Calu3 (cell line): ENCODE measurements at regions of chr9 and their contacts with region 1.

Region 1: DNA sequence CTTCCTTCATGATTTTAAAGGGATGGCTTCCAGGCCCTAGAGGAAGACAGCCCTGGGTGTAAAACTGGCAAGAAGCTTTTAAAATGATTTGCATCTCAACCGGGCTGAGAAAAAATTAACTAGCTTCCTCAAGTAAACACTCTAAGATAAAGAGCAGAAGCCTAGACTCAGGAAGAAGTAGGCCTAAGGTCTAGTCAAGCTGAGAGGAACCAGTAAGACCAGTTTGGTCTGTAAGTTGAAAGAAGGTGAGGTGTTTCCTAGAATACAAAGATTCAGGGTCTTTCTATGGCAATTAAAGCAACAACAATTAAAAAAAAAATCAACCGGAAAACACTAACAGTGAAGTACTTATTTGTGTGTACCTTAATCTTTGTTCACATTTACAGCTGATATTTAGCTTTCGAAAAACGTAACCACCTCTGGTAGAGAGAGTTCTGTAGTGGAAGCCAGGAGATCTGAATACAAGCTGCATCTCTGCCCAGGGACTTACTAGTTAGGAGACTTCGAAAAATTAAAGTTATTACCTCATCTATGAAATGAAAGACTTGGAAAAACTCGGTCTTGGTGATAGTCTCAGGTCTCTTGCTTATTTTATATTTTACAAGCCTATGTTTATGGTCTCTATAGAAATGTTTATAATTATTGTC is 75.7 kb downstream of the TUSC1 start:
- DNase-seq: peak; percentile 9
- H3K4me3 Mint-ChIP-seq: peak overlapping the region; percentile 40
- H3K27ac Mint-ChIP-seq: peak overlapping the region; percentile 45
- H3K4me1 Mint-ChIP-seq: peaks cover 22% of the 10 kb centered on the region
- H3K27me3 Mint-ChIP-seq: no peaks in the 10 kb centered on the region
- CTCF ChIP-seq: no peak

Region 2: GRCh38 chr9:25648116-25648515 is 45.6 kb after region 1 on chr9:
- CTCF ChIA-PET with region 1: no interaction called
- intact Hi-C with region 1: loop called (anchors 5 kb)
- DNase-seq: no peak
- H3K4me3 Mint-ChIP-seq: no peak overlapping the region
- H3K27ac Mint-ChIP-seq: no peak overlapping the region
- H3K4me1 Mint-ChIP-seq: peaks cover 9% of the 10 kb centered on the region
- H3K27me3 Mint-ChIP-seq: no peaks in the 10 kb centered on the region
- CTCF ChIP-seq: no peak

Region 3: DNA sequence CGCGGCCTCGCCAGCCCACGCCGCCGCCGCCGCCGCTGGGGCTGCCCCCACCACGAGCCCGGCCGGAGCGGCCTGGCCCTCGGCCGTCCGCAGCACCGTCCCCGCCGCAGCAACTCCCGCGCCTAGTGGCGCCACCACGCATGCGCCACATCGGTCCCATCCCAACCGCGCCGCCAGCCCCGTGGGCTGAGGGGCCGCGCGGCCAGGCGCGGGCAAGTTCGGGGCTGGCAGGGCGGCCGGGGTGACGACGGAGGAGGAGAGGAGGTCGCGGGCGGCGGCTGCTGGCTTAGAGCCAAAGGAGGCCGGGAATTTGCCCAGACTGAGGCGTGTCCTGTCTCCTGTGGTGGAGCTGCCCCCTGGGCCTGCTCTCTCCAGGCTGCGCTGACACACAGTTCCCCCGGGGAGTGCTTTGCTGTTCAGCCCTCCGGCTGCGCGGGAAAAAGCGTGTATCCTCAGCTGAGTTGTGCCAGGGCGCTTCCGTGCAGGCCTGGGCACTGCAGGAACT is 75.7 kb after region 1 on chr9 and contains the start of gene TUSC1:
- CTCF ChIA-PET with region 1: no interaction called
- intact Hi-C with region 1: loop called (anchors 5 kb)
- DNase-seq: peak; percentile 78
- H3K4me3 Mint-ChIP-seq: peak within 1 kb of the TSS; percentile 61
- H3K27ac Mint-ChIP-seq: no peak within 1 kb of the TSS
- H3K4me1 Mint-ChIP-seq: no peaks in the 10 kb centered on the region
- H3K27me3 Mint-ChIP-seq: no peaks in the 10 kb centered on the region
- CTCF ChIP-seq: no peak
- total RNA-seq, gene TUSC1: 5.1 and 6.8 TPM in 2 replicates